ENCODE measurements at regions of chr2 and their contacts with region 1.

Region 1: GRCh38 chr2:38442643-38443541 is 65.8 kb upstream of the ATL2 start:
- DNase-seq: no peak
- H3K4me3 Mint-ChIP-seq: no peak overlapping the region
- H3K27ac Mint-ChIP-seq: no peak overlapping the region
- H3K4me1 Mint-ChIP-seq: peaks cover 8% of the 10 kb centered on the region
- H3K27me3 Mint-ChIP-seq: peaks cover 46% of the 10 kb centered on the region

Region 2: GRCh38 chr2:38485734-38486133 is 42.8 kb after region 1 on chr2:
- intact Hi-C with region 1: loop called (anchors 5 kb)
- DNase-seq: no peak
- H3K4me3 Mint-ChIP-seq: no peak overlapping the region
- H3K27ac Mint-ChIP-seq: no peak overlapping the region
- H3K4me1 Mint-ChIP-seq: no peaks in the 10 kb centered on the region
- H3K27me3 Mint-ChIP-seq: peaks cover 2% of the 10 kb centered on the region